Activated CD8-positive, alpha-beta T cell treated with anti-CD3 and anti-CD28 coated beads for 36 hours (primary cell): ENCODE measurements at regions of chr3 and their contacts with region 1.

Region 1: DNA sequence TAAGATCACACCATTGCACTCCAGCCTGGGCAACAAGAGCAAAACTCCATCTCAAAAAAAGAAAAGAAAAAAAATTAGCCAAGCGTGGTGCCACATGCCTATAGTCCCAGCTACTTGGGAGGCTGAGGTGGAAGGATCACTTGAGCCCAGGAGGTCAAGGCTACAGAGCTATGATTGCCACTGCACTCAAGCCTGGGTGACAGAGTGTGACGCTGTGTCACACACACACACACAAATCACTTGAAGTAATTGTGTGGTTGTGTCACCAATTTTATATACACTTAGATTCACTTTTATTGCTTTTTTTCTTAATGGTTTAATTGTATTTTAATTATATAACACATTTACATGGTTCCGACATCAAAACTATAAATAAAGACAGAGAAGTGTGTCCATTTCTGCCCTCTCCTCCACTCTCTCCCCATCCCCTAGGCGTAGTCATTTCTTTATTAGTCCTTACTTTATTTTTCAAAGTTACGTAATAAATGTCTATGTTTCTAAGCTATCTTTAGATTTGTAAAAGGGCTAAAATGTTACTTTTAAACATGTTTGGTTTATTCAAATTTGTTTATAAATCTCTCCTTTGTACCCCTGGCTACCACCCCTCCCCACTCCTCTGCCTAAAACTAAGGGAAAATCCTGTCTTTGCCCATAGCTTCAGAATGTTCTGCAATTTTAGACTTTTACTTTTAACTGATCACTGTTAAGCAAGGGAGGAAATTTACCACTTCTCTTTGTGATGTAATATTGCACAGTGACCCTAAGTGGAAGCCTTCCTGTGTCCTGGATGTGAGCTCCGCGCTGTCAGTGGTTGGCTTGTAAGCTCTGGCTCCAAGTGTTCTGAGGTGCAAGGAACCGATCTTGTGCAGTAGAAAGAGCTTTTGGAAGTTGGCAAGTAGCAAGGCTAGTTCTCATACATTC is 10.8 kb upstream of the VILL start:
- DNase-seq: no peak
- ATAC-seq: no peak
- H3K4me3 Mint-ChIP-seq: no peak overlapping the region
- H3K27ac Mint-ChIP-seq: no peak overlapping the region
- H3K4me1 Mint-ChIP-seq: peaks cover 3% of the 10 kb centered on the region
- H3K27me3 Mint-ChIP-seq: no peaks in the 10 kb centered on the region
- CTCF ChIP-seq: no peak

Region 2: GRCh38 chr3:37996785-37997301 is 17.0 kb after region 1 on chr3:
- CTCF ChIA-PET with region 1: interaction called, 35 read pairs
- POLR2A ChIA-PET with region 1: interaction called, 3 read pairs
- intact Hi-C with region 1: no loop called
- DNase-seq: peak; percentile 93
- ATAC-seq: peak; percentile 71
- H3K4me3 Mint-ChIP-seq: no peak overlapping the region
- H3K27ac Mint-ChIP-seq: peak overlapping the region; percentile 95
- H3K4me1 Mint-ChIP-seq: peaks cover 51% of the 10 kb centered on the region
- H3K27me3 Mint-ChIP-seq: no peaks in the 10 kb centered on the region
- CTCF ChIP-seq: peak; percentile 96

Region 3: GRCh38 chr3:38004415-38005076 is 24.7 kb after region 1 on chr3:
- CTCF ChIA-PET with region 1: interaction called, 35 read pairs
- POLR2A ChIA-PET with region 1: interaction called, 3 read pairs
- intact Hi-C with region 1: no loop called
- DNase-seq: peak; percentile 78
- ATAC-seq: peak; percentile 54
- H3K4me3 Mint-ChIP-seq: no peak overlapping the region
- H3K27ac Mint-ChIP-seq: peak overlapping the region; percentile 46
- H3K4me1 Mint-ChIP-seq: peaks cover 17% of the 10 kb centered on the region
- H3K27me3 Mint-ChIP-seq: no peaks in the 10 kb centered on the region
- CTCF ChIP-seq: peak; percentile 49

Region 4: DNA sequence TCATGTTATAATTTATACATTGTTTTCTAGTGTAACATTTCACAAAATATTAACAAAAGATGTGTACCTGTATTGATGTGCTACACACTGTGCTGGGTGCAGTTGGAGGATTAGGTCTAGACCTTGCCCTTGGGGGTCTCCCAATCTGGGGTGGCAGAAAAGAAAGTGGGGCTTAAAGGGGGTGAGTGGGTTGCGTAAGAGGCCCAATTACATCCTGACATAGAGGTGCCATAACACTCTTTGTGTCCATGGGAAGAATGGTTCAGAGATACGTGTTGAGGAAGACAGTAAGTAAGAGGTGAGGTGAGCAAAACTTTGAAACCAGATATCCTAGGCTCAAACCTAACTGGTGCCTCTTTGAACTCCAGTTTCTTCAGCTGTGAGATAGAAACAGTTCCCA is 90.2 kb after region 1 on chr3:
- CTCF ChIA-PET with region 1: no interaction called
- POLR2A ChIA-PET with region 1: no interaction called
- intact Hi-C with region 1: no loop called
- DNase-seq: no peak
- ATAC-seq: no peak
- H3K4me3 Mint-ChIP-seq: no peak overlapping the region
- H3K27ac Mint-ChIP-seq: no peak overlapping the region
- H3K4me1 Mint-ChIP-seq: no peaks in the 10 kb centered on the region
- H3K27me3 Mint-ChIP-seq: no peaks in the 10 kb centered on the region
- CTCF ChIP-seq: no peak